ENCODE measurements at regions of chr2 and their contacts with region 1.

Region 1: GRCh38 chr2:117835990-117836760 is 21.7 kb downstream of the DDX18 start:
- DNase-seq: no peak
- ATAC-seq: peak; percentile 89
- H3K4me3 ChIP-seq: no peak overlapping the region
- H3K27ac ChIP-seq: no peak overlapping the region
- H3K4me1 ChIP-seq: no peaks in the 10 kb centered on the region
- H3K27me3 ChIP-seq: no peaks in the 10 kb centered on the region
- CTCF ChIP-seq: peak; percentile 87

Region 2: GRCh38 chr2:117571590-117572349 is 264.4 kb before region 1 on chr2:
- CTCF ChIA-PET with region 1: no interaction called
- POLR2A ChIA-PET with region 1: no interaction called
- in situ Hi-C with region 1: no loop called
- intact Hi-C with region 1: no loop called
- DNase-seq: no peak
- ATAC-seq: no peak
- H3K4me3 ChIP-seq: no peak overlapping the region
- H3K27ac ChIP-seq: no peak overlapping the region
- H3K4me1 ChIP-seq: no peaks in the 10 kb centered on the region
- H3K27me3 ChIP-seq: no peaks in the 10 kb centered on the region
- CTCF ChIP-seq: no peak

Region 3: GRCh38 chr2:117820444-117820843 is 15.7 kb before region 1 on chr2:
- CTCF ChIA-PET with region 1: interaction called, 11 read pairs
- POLR2A ChIA-PET with region 1: interaction called, 3 read pairs
- in situ Hi-C with region 1: no loop called
- intact Hi-C with region 1: no loop called
- DNase-seq: no peak
- ATAC-seq: no peak
- H3K4me3 ChIP-seq: no peak overlapping the region
- H3K27ac ChIP-seq: no peak overlapping the region
- H3K4me1 ChIP-seq: peaks cover 15% of the 10 kb centered on the region
- H3K27me3 ChIP-seq: no peaks in the 10 kb centered on the region
- CTCF ChIP-seq: no peak

Region 4: DNA sequence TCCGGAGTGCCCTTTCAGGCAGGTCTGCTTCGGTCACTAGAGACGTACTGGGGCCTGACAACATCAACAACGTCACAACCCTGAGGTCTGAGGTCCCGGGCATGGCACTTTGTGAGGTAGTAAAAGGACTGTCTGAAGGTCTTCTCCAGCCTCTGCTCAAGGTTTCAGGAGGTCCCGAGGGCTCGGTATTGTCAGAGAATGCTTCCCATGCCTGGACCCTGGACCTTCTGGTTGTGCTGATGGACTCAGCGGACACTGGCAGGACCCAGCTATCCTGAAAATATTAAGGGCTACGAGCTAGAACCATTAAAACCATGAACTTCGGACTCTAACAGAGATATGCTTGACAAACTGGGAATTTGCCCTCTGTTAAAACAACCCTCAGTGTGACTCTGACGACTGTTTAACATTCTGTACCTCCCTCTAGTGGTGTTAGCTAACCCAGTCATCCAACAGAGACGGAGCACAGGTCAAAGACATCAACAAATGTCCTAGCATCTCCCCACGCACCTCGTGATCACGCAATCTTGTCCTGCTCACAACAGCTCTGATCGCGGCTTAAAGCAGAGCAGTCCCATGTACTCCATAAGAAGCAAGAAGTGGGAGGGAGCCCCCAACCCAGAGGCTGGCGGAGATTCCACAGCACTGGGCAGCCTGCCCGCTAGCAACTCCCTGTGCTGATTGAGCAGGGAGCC is 81.2 kb after region 1 on chr2:
- CTCF ChIA-PET with region 1: no interaction called
- POLR2A ChIA-PET with region 1: no interaction called
- in situ Hi-C with region 1: no loop called
- intact Hi-C with region 1: loop called (anchors 10 kb)
- DNase-seq: no peak
- ATAC-seq: peak; percentile 60; the same call in 1 of the 2 replicates
- H3K4me3 ChIP-seq: no peak overlapping the region
- H3K27ac ChIP-seq: no peak overlapping the region
- H3K4me1 ChIP-seq: no peaks in the 10 kb centered on the region
- H3K27me3 ChIP-seq: no peaks in the 10 kb centered on the region
- CTCF ChIP-seq: peak; percentile 39

Region 5: GRCh38 chr2:118003396-118003824 is 167.2 kb after region 1 on chr2:
- CTCF ChIA-PET with region 1: interaction called, 3 read pairs
- POLR2A ChIA-PET with region 1: no interaction called
- in situ Hi-C with region 1: no loop called
- intact Hi-C with region 1: loop called (anchors 2 kb)
- DNase-seq: peak; percentile 56
- ATAC-seq: peak; percentile 95
- H3K4me3 ChIP-seq: no peak overlapping the region
- H3K27ac ChIP-seq: no peak overlapping the region
- H3K4me1 ChIP-seq: no peaks in the 10 kb centered on the region
- H3K27me3 ChIP-seq: no peaks in the 10 kb centered on the region
- CTCF ChIP-seq: peak; percentile 89

Region 6: DNA sequence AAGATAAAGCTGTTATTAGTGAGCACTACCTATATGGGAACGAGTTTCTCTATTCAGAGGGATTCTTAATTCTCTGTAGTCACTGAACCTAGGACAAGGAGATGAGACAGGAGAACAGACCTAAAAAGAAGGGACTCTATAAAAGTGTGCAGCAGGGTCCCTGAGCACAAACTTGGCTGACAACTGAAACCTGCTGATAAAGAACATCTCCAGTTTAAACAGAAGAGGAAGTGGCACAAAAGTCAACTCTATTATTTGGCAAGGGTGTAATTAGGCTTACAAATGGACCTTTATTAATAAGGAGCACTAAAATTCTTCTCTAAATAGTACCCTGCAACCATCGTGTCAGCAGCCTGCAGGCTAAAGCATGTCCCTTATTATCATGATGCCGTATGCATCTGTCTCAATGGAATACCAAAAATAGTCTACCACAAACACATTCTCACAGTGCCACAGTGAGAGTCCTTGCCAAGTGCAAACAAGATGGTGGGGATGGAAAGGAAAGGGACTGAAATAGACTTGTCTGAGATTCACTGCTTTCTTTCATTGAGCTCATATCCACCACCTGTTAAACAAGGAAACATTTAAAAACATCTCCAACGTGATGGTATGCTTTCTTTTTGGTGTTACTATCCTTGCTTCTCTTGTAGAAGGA is 512.3 kb after region 1 on chr2:
- CTCF ChIA-PET with region 1: no interaction called
- POLR2A ChIA-PET with region 1: interaction called, 10 read pairs
- in situ Hi-C with region 1: no loop called
- intact Hi-C with region 1: no loop called
- DNase-seq: no peak
- ATAC-seq: no peak
- H3K4me3 ChIP-seq: no peak overlapping the region
- H3K27ac ChIP-seq: no peak overlapping the region
- H3K4me1 ChIP-seq: no peaks in the 10 kb centered on the region
- H3K27me3 ChIP-seq: no peaks in the 10 kb centered on the region; the same call in 1 of the 2 replicates
- CTCF ChIP-seq: no peak